Dendritic cell treated with granulocyte-macrophage colony-stimulating factor and Interleukin-4, amounts not matched to agents 40 ng/mL and 50 ng/mL, for 4 days (primary cell): ENCODE measurements at regions of chr12 and their contacts with region 1.

Region 1: DNA sequence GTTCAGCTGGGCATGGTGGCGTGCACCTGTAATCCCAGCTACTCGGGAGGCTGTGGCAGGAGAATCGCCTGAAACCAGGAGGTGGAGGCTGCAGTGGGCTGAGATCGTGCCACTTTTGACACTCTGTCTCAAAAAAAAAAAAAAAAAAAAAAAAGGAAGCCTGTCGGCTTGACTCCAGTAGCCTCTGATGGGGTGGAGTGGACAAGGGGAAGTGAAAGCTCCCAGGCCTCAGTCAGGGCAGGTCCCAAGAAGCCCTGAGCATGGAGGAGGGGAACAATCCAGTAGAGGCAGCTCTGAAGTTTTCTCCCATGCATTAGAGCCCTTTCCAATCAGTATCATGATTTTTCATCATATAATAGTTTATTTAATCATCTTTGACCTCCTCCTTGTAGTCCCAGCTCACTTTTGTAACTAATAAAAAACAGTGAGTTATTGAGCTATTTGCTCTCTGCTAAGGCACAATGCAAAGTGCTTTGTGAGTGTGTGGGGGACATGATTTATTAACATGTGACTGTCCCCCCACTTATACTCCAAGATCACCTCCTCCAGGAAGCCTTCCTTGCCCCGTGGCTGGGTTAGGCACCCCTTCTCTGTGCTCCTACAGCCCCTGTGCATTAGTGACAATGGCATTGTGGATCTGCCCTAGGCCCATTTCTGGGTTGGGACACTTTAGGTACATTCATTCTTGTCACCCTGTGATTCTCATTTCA is 4.7 kb upstream of the SSH1 start:
- H3K4me3 Mint-ChIP-seq: peak overlapping the region; percentile 17
- H3K27ac Mint-ChIP-seq: peak overlapping the region; percentile 72
- H3K4me1 Mint-ChIP-seq: peaks cover 58% of the 10 kb centered on the region
- H3K27me3 Mint-ChIP-seq: no peaks in the 10 kb centered on the region

Region 2: GRCh38 chr12:108730365-108731104 is 131.5 kb before region 1 on chr12:
- intact Hi-C with region 1: no loop called
- H3K4me3 Mint-ChIP-seq: peak overlapping the region; percentile 92
- H3K27ac Mint-ChIP-seq: peak overlapping the region; percentile 97
- H3K4me1 Mint-ChIP-seq: peaks cover 59% of the 10 kb centered on the region
- H3K27me3 Mint-ChIP-seq: no peaks in the 10 kb centered on the region

Region 3: DNA sequence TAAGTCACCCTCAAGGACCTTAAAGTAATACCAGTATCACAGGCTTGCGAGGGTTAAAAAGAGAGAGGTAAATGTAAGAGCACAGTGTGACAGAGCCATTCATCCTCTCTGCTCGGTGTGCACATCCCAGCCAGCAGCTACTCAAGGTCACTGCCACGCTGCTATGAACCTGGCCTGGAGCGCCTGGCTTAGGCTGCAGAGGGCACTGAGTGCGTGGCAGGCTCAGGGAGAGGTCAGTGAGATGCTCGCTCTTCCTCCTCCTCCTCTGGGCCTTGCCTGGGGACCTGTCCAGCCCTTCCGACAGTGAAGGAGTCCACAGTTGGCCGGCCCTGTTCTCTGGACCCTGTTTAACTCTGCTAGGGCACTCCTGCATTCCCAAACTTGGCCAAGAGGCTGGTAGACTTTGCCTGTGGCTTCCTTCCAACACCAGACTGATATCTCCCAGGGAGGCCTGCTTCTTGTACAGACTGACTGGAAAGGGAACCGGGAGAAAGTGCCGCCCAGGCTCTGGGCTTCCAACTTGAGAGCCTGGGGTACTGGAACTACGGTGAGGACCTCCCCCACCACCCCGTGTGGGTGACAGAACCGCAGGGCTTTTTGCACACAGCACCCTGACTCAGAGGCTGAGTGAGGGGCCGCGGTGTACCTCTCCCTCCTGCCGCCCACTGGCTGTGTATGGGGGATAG is 68.1 kb before region 1 on chr12:
- intact Hi-C with region 1: no loop called
- H3K4me3 Mint-ChIP-seq: no peak overlapping the region
- H3K27ac Mint-ChIP-seq: no peak overlapping the region
- H3K4me1 Mint-ChIP-seq: no peaks in the 10 kb centered on the region
- H3K27me3 Mint-ChIP-seq: no peaks in the 10 kb centered on the region

Region 4: DNA sequence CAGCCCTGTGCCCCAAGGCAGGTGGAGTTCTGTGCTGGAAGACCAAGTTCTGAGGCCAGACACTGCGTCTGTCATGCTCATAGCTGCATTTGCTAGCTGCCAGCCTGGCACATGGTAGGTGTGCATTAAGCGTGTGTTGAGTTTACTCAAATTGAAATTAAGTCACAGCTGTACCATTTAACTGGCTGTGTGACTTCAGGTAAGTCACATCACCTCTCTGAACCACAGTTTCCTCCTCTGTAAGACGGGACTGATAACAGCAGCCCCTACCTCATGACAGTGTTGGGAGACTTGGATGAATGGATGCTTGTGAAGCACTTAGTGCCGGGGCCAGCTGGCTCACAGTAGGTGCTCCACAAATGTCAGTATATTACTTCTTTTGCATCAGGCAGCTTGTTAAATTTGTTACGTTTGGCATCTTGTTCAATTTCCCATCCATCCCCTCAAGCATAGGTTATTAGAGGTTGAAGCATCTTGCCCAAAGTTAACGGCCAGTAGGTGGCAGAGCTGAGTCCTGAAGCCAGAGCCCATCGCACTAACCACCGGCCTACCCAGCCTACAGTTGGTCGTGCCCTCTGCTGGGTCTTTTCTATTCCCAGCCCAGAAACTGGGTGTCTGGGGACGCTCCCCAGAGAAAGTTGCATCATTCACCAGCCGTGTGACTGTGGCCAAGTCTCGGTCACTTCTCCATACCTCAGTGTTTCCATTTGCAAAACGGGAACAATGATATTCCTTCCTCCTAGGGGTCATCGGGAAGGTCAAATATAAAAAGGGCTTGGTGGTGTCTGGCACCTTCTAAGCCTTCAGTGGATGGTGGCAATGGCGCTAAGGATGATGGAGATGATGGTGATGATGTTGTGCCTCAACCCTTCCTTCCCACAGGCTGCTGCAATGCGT is 22.3 kb after region 1 on chr12:
- intact Hi-C with region 1: loop called (anchors 2 kb)
- H3K4me3 Mint-ChIP-seq: no peak overlapping the region
- H3K27ac Mint-ChIP-seq: peak overlapping the region; percentile 30
- H3K4me1 Mint-ChIP-seq: peaks cover 11% of the 10 kb centered on the region
- H3K27me3 Mint-ChIP-seq: no peaks in the 10 kb centered on the region

Region 5: GRCh38 chr12:108907476-108908351 is 45.7 kb after region 1 on chr12:
- intact Hi-C with region 1: loop called (anchors 5 kb)
- H3K4me3 Mint-ChIP-seq: peak overlapping the region; percentile 34
- H3K27ac Mint-ChIP-seq: peak overlapping the region; percentile 98
- H3K4me1 Mint-ChIP-seq: peaks cover 73% of the 10 kb centered on the region
- H3K27me3 Mint-ChIP-seq: no peaks in the 10 kb centered on the region

Region 6: GRCh38 chr12:109093022-109093918 is 231.2 kb after region 1 on chr12 and contains the start of gene ALKBH2:
- intact Hi-C with region 1: no loop called
- H3K4me3 Mint-ChIP-seq: peak within 1 kb of the TSS; percentile 74
- H3K27ac Mint-ChIP-seq: peak within 1 kb of the TSS; percentile 66
- H3K4me1 Mint-ChIP-seq: peaks cover 27% of the 10 kb centered on the region
- H3K27me3 Mint-ChIP-seq: no peaks in the 10 kb centered on the region